PC-9 (cell line): ENCODE measurements at regions of chr5 and their contacts with region 1.

Region 1: GRCh38 chr5:172131690-172132089 is 56.3 kb downstream of the STK10 start:
- DNase-seq: no peak
- H3K4me3 ChIP-seq: no peak overlapping the region
- H3K27ac ChIP-seq: no peak overlapping the region
- H3K4me1 ChIP-seq: no peaks in the 10 kb centered on the region
- H3K27me3 ChIP-seq: no peaks in the 10 kb centered on the region
- CTCF ChIP-seq: no peak

Region 2: DNA sequence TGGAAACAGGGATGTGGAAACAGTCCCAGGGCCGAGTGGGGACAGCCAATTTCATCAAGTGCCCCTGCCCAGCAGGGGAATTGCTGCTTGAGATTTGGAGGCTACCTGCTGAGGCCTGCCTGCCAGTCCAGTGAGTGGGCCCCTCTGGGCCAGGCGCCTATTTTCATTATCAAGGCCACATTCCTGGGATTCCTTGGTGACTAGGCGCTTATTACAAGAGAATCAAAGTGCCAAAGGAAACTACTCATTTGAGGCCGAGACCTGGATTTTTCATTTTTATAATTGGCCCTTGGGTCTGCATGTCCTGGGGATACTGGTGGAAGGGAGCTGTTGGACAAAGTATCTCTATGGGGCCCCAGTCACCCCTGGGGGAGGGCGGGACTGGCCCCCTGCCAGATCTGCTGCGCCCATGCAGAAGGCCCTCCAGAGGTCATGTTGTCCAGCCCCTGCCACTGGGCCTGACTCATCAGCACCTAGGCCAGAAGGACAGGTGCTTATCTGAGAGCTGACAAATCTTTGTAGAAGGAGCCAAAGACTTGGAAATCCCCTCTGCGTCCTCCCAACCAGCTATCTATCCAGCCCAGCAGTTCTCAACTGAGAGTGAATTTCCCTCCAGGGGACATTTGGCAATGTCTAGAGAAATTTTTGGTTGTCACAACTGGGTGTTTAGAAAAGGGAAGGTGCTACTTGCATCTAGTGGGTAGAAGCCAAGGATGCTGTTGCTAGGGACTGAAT is 1980.4 kb before region 1 on chr5:
- CTCF ChIA-PET with region 1: no interaction called
- POLR2A ChIA-PET with region 1: no interaction called
- intact Hi-C with region 1: no loop called
- DNase-seq: peak; percentile 100
- H3K4me3 ChIP-seq: no peak overlapping the region; the same call in 1 of the 2 replicates
- H3K27ac ChIP-seq: peak overlapping the region; percentile 91
- H3K4me1 ChIP-seq: peaks cover 55% of the 10 kb centered on the region
- H3K27me3 ChIP-seq: no peaks in the 10 kb centered on the region
- CTCF ChIP-seq: no peak

Region 3: GRCh38 chr5:171957591-171958251 is 174.0 kb before region 1 on chr5:
- CTCF ChIA-PET with region 1: no interaction called
- POLR2A ChIA-PET with region 1: interaction called, 11 read pairs
- intact Hi-C with region 1: no loop called
- DNase-seq: no peak
- H3K4me3 ChIP-seq: no peak overlapping the region
- H3K27ac ChIP-seq: no peak overlapping the region
- H3K4me1 ChIP-seq: peaks cover 37% of the 10 kb centered on the region
- H3K27me3 ChIP-seq: no peaks in the 10 kb centered on the region
- CTCF ChIP-seq: no peak

Region 4: DNA sequence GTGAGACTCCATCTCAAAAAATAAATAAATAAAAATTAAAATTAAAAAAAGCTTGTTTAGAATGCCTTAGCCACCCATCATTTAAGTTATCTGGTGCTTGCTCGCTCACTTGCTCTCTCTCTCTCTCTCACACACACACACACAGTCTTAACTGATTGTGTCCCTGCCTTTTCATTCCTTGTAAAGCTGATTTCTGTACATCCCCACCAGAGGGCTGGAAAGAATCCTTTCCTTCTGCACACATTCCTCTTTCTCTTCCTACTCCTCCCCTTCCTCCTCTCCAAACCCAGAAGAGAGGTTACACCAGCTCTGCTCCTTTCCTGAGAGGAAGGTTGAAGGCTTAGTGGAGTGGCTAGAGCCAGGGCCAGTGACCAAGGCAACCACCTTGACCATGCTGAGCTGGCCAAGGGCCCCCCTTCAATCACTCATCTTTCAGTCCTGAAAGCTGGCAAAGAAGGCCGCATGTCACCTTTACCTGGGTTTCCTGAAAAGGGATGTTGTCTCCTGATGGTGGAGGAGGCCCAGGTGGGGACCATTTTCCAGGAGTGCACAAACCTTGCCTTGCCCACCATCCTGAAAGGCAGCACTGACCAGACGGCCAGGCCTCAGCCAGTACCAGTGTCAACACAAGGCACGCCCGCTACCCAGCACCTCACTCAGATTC is 30.8 kb after region 1 on chr5:
- CTCF ChIA-PET with region 1: no interaction called
- POLR2A ChIA-PET with region 1: no interaction called
- intact Hi-C with region 1: no loop called
- DNase-seq: no peak
- H3K4me3 ChIP-seq: no peak overlapping the region
- H3K27ac ChIP-seq: no peak overlapping the region
- H3K4me1 ChIP-seq: no peaks in the 10 kb centered on the region
- H3K27me3 ChIP-seq: no peaks in the 10 kb centered on the region
- CTCF ChIP-seq: no peak